ENCODE measurements at regions of chr19 and their contacts with region 1.

Region 1: GRCh38 chr19:2151339-2152229 is at the start of gene AP3D1:
- DNase-seq: peak; percentile 96 to 99 (median 98)
- ATAC-seq: peak; percentile 95
- H3K4me3 ChIP-seq: peak within 1 kb of the TSS; percentile 98
- H3K27ac ChIP-seq: peak within 1 kb of the TSS; percentile 96
- H3K4me1 ChIP-seq: peaks cover 21 to 30% of the 10 kb centered on the region in 2 experiments; a peak in 4 of 5 replicates
- H3K27me3 ChIP-seq: no peaks in the 10 kb centered on the region
- CTCF ChIP-seq: no peak
- EP300 ChIP-seq: no peak
- POLR2A ChIP-seq: no peak
- RAD21 ChIP-seq: no peak
- polyA plus RNA-seq, gene AP3D1: 1.2 to 1.6 TPM

Region 2: GRCh38 chr19:1935484-1936208 is 215.9 kb before region 1 on chr19:
- CTCF ChIA-PET with region 1: no interaction called
- POLR2A ChIA-PET with region 1: no interaction called
- in situ Hi-C with region 1: no loop called
- intact Hi-C with region 1: no loop called
- DNase-seq: peak in 3 of 4 experiments; percentile 45 to 66 (median 58)
- ATAC-seq: peak; percentile 53
- H3K4me3 ChIP-seq: no peak overlapping the region
- H3K27ac ChIP-seq: peak overlapping the region; percentile 39; the same call in 1 of the 3 replicates
- H3K4me1 ChIP-seq: peaks cover 19 to 49% of the 10 kb centered on the region in 2 experiments
- H3K27me3 ChIP-seq: no peaks in the 10 kb centered on the region
- CTCF ChIP-seq: no peak
- EP300 ChIP-seq: no peak
- POLR2A ChIP-seq: no peak
- RAD21 ChIP-seq: no peak

Region 3: GRCh38 chr19:2236314-2237050 is 84.9 kb after region 1 on chr19 and contains the starts of genes PLEKHJ1 and SF3A2:
- CTCF ChIA-PET with region 1: no interaction called
- POLR2A ChIA-PET with region 1: interaction called, 5 read pairs
- in situ Hi-C with region 1: no loop called
- intact Hi-C with region 1: loop called (anchors 1 kb)
- DNase-seq: peak; percentile 95 to 98 (median 98)
- ATAC-seq: peak; percentile 83
- H3K4me3 ChIP-seq: peak within 1 kb of the TSS; percentile 97
- H3K27ac ChIP-seq: peak within 1 kb of the TSS; percentile 98
- H3K4me1 ChIP-seq: peaks cover 28 to 71% of the 10 kb centered on the region in 2 experiments
- H3K27me3 ChIP-seq: no peaks in the 10 kb centered on the region
- CTCF ChIP-seq: peak; percentile 96 to 99 (median 99)
- EP300 ChIP-seq: no peak; the same call in 1 of the 2 replicates
- POLR2A ChIP-seq: peak; percentile 90
- RAD21 ChIP-seq: peak; percentile 98 to 100
- polyA plus RNA-seq, gene PLEKHJ1: 1.5 to 6.8 TPM
- polyA plus RNA-seq, gene SF3A2: 0.17 to 0.35 TPM

Region 4: DNA sequence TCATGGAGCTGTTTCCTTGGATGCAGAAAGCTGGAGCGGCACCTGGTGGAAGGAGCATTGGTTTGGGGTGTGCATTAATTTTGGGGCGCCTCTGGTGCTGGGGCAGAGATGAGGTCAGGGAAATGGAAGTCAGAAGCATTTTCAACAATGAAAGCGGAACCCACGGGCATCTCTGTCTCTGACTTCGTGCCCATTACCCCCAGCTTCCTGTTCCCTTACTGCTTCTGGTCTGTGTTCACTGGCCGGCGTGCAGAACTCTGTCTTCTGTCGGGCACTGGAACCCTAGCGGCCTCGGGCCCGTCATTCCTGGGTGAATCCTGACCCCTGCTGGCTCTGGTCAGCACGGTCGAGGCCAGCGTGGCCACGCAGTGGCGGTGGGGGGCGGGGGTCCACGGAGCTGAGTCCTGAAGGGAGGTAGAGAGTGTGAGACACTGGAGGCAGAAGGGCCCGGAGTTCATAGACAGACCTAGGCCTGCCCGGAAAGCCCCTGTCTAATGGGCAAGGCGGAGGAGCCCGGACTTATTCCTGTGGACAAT is 164.3 kb after region 1 on chr19:
- CTCF ChIA-PET with region 1: no interaction called
- POLR2A ChIA-PET with region 1: no interaction called
- in situ Hi-C with region 1: loop called (anchors 5 kb)
- intact Hi-C with region 1: loop called (anchors 2 kb)
- DNase-seq: peak in 3 of 4 experiments; percentile 43 to 69 (median 66)
- ATAC-seq: peak; percentile 89
- H3K4me3 ChIP-seq: no peak overlapping the region
- H3K27ac ChIP-seq: no peak overlapping the region
- H3K4me1 ChIP-seq: peaks cover 3 to 33% of the 10 kb centered on the region in 2 experiments; a peak in 3 of 5 replicates
- H3K27me3 ChIP-seq: no peaks in the 10 kb centered on the region
- CTCF ChIP-seq: peak; percentile 57 to 79 (median 76)
- EP300 ChIP-seq: no peak
- POLR2A ChIP-seq: no peak
- RAD21 ChIP-seq: peak; percentile 64 to 87

Region 5: DNA sequence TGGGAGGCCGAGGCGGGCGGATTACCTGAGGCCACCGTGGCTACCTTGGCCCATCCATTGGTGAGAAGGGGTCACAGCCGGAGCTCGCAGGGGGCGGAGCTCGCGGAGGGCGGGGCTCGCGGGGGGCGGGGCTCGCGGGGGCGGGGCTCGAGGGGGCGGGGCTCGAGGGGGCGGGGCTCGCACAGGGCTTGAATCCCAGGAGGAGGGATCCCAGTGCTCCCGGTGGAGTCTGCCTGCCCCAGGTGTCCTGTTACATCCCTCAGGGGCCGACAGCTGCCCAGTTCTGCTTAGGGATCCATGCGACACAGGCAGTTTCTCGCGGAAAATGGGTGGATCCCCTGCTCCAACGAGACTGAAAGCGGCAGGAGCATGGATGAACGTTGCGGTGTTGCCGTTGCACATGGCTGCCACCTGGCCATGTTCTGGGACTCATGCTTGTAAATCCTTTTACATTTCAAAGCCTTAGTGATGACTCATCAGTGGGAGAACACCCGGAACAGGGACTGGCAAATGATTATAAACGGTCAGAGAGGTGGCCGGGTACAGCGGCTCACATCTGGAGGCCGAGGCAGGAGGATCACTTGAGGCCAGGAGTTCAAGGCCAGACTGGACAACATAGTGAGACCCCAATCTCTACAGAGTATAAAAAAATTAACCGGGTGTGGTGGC is 233.6 kb after region 1 on chr19:
- CTCF ChIA-PET with region 1: no interaction called
- POLR2A ChIA-PET with region 1: no interaction called
- in situ Hi-C with region 1: loop called (anchors 10 kb)
- intact Hi-C with region 1: loop called (anchors 5 kb)
- DNase-seq: peak; percentile 77 to 95 (median 94)
- ATAC-seq: peak; percentile 80
- H3K4me3 ChIP-seq: peak overlapping the region; percentile 38
- H3K27ac ChIP-seq: peak overlapping the region; percentile 65; the same call in 2 of the 3 replicates
- H3K4me1 ChIP-seq: peaks cover 6 to 21% of the 10 kb centered on the region in 2 experiments; a peak in 4 of 5 replicates
- H3K27me3 ChIP-seq: no peaks in the 10 kb centered on the region
- CTCF ChIP-seq: no peak
- EP300 ChIP-seq: no peak
- POLR2A ChIP-seq: no peak; the same call in 1 of the 2 replicates
- RAD21 ChIP-seq: peak in 1 of 2 experiments; percentile 20; a peak in 1 of 4 replicates

Region 6: GRCh38 chr19:2391118-2391725 is 239.6 kb after region 1 on chr19:
- CTCF ChIA-PET with region 1: no interaction called
- POLR2A ChIA-PET with region 1: no interaction called
- in situ Hi-C with region 1: loop called (anchors 10 kb)
- intact Hi-C with region 1: loop called (anchors 5 kb)
- DNase-seq: peak; percentile 55 to 71 (median 61)
- ATAC-seq: peak; percentile 59
- H3K4me3 ChIP-seq: no peak overlapping the region
- H3K27ac ChIP-seq: no peak overlapping the region; the same call in 2 of the 3 replicates
- H3K4me1 ChIP-seq: peaks cover 6 to 19% of the 10 kb centered on the region in 2 experiments; a peak in 4 of 5 replicates
- H3K27me3 ChIP-seq: no peaks in the 10 kb centered on the region
- CTCF ChIP-seq: peak; percentile 69 to 89 (median 78)
- EP300 ChIP-seq: 0 out of 2 replicates have a peak, but pooled peaks have one; percentile 11
- POLR2A ChIP-seq: no peak
- RAD21 ChIP-seq: peak; percentile 78 to 85

Region 7: DNA sequence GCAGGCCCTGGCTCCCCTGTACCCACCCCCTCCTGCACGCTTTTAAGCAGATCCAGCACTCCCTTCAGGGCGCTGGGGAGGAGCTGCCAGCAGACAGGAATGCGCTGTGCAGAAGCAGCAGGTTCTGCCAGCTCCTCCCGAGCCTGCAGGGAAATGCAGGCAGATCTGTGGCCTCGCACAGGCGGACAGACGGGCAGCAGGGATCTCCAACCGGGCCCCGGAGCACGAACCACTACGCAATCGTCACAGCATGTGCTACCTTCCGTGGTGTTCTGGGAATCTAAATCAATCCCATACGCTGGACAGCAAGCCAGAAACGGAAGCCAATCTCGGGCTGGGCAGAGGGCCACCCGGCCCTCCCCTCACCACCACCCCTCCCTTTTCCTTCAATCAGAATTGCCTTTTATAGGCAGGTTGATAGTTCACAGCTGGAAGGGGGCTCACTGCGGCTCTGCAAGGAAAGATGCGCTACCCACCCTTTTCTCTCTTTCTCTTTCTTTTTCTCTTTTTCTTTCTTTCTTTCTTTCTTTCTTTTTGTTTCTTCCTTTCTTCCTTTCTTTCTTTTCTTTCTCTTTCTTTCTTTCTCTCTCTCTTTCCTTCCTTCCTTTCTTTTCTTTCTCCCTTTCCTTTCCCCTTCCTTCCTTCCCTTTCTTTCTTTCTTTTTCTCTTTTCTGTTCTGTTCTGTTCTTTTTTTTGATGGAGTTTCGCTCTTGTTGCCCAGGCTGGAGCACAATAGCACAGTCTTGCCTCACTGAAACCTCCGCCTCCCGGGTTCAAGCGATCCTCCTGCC is 451.0 kb after region 1 on chr19:
- CTCF ChIA-PET with region 1: no interaction called
- POLR2A ChIA-PET with region 1: no interaction called
- in situ Hi-C with region 1: loop called (anchors 10 kb)
- intact Hi-C with region 1: no loop called
- DNase-seq: no peak
- ATAC-seq: no peak
- H3K4me3 ChIP-seq: no peak overlapping the region
- H3K27ac ChIP-seq: no peak overlapping the region
- H3K4me1 ChIP-seq: peaks cover 3 to 15% of the 10 kb centered on the region in 2 experiments; a peak in 4 of 5 replicates
- H3K27me3 ChIP-seq: peaks cover 18 to 43% of the 10 kb centered on the region in 2 experiments
- CTCF ChIP-seq: no peak
- EP300 ChIP-seq: no peak
- POLR2A ChIP-seq: no peak
- RAD21 ChIP-seq: no peak

Region 8: DNA sequence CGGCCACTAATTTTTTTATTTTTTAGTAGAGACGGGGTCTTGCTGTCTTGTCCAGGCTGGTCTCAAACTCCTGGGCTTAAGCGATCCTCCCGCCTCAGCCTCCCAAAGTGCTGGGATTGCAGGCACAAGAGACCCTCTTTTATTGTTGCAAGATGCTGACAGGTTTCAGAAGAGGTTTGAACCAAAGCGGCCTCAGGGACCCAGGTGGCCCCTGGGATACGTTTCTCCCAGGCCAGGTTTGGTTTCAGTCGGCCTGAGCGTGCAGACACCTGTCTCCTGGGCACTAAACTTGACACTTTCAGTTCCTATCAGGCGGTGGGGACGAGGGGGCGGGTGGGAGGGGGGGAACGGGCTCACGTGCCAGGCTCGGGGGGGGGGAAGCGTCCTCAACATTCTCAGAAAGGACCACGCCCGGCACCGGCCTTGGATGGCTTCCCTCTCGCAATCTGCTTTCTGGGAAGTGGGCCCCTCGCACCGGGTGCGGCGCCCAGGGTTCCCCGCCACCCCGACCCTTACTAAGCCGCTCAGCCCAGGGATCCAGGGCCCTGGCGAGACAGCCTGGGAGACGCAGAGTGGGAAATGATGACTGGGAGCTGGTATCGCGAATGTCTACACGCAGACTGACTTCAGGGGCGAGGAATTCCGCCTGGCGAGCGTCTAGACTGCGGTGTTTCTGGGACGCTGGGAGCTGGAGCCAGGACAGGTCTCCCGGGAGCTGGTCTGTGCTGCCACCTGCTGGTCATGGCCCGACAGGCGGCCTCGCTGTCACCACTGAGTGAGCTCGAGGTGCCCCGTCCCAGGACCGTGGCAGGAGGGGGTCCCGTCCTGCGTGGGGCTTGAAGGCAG is 459.3 kb after region 1 on chr19:
- CTCF ChIA-PET with region 1: interaction called, 4 read pairs
- POLR2A ChIA-PET with region 1: no interaction called
- in situ Hi-C with region 1: loop called (anchors 10 kb)
- intact Hi-C with region 1: loop called (anchors 10 kb)
- DNase-seq: peak; percentile 83 to 87 (median 87)
- ATAC-seq: peak; percentile 97
- H3K4me3 ChIP-seq: peak overlapping the region; percentile 41
- H3K27ac ChIP-seq: no peak overlapping the region
- H3K4me1 ChIP-seq: peaks cover 0 to 25% of the 10 kb centered on the region in 2 experiments; a peak in 2 of 5 replicates
- H3K27me3 ChIP-seq: peaks cover 18 to 49% of the 10 kb centered on the region in 2 experiments; a peak in 4 of 5 replicates
- CTCF ChIP-seq: peak; percentile 87 to 93 (median 91)
- EP300 ChIP-seq: no peak
- POLR2A ChIP-seq: no peak
- RAD21 ChIP-seq: peak; percentile 92 to 96